A673 (cell line): ENCODE measurements at regions of chr7 and their contacts with region 1.

Region 1: DNA sequence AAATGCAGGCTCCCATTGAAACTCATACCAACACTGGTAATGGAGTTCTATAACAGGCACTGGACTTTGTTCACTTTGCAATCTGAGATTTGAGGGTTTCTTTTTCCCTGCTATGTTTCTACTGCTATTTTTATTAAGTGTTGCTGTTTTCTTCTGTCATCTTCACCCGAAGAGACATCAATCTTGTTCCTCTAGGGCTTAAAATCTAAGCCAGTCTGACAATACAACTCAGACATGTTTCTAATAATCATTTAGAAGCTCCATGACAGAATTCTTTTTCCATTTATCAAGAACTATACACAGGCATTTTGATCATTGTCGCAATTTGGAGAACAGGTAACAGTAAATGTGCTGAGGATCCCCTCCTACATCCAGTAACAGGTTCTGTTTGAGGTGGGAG is 98.5 kb upstream of the GNAI1 start:
- DNase-seq: no peak
- H3K4me3 ChIP-seq: no peak overlapping the region
- H3K27ac ChIP-seq: no peak overlapping the region
- H3K4me1 ChIP-seq: peaks cover 15% of the 10 kb centered on the region
- H3K27me3 ChIP-seq: no peaks in the 10 kb centered on the region
- CTCF ChIP-seq: no peak

Region 2: DNA sequence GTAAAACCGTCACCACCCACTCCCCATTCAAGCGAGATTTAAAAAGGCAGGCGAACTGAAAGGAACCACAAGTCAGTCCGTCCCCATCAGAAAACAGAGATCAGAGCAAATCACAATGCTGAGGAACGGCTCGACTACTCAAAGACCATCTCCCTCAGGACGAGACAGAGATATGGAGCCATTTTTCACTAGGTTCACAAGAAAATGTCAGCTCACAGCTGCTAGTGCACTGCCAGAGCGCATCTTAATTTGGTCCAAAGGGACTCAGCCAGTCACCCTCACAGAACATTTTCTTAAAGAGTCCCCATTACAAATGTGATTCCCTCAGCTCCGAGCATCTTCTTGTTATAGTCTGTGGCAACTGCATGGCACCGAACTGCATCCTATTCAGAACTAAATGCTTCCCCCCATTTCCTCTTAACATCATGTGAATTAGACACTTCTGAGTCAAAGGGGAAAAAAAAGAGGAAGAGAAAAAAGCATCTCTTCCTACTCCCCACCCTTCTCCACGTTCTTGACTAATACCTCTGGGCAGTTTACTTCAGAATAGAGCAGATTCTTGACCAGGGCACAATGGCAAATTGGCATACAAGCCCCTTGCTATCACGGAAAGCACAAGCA is 1266.5 kb before region 1 on chr7:
- CTCF ChIA-PET with region 1: no interaction called
- POLR2A ChIA-PET with region 1: interaction called, 25 read pairs
- intact Hi-C with region 1: no loop called
- DNase-seq: no peak
- H3K4me3 ChIP-seq: no peak overlapping the region
- H3K27ac ChIP-seq: no peak overlapping the region
- H3K4me1 ChIP-seq: no peaks in the 10 kb centered on the region
- H3K27me3 ChIP-seq: peaks cover 92% of the 10 kb centered on the region
- CTCF ChIP-seq: no peak

Region 3: DNA sequence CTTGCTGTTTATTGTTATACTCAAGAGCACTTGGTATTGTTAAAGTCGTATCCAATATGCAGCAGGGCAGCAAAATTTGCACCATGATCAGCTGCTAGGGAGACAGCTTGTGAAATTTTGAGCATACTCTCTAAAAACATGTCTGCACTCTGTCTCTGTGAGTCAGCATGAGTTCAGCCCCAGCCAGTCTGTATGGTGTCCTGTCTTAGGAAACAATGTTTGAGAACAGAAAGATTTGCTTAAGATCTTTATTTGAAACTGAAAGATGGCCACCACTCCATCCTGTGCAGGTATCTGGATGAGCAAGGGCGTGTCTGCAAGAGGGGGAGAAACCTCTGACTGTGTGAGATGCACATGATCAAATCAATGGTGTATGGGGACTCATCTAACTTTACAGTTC is 195.6 kb after region 1 on chr7:
- CTCF ChIA-PET with region 1: no interaction called
- POLR2A ChIA-PET with region 1: no interaction called
- intact Hi-C with region 1: no loop called
- DNase-seq: no peak
- H3K4me3 ChIP-seq: no peak overlapping the region
- H3K27ac ChIP-seq: no peak overlapping the region
- H3K4me1 ChIP-seq: peaks cover 5% of the 10 kb centered on the region
- H3K27me3 ChIP-seq: no peaks in the 10 kb centered on the region
- CTCF ChIP-seq: no peak